Right cardiac atrium (tissue), 5 donors: ENCODE measurements at regions of chr2 and their contacts with region 1.

Region 1: DNA sequence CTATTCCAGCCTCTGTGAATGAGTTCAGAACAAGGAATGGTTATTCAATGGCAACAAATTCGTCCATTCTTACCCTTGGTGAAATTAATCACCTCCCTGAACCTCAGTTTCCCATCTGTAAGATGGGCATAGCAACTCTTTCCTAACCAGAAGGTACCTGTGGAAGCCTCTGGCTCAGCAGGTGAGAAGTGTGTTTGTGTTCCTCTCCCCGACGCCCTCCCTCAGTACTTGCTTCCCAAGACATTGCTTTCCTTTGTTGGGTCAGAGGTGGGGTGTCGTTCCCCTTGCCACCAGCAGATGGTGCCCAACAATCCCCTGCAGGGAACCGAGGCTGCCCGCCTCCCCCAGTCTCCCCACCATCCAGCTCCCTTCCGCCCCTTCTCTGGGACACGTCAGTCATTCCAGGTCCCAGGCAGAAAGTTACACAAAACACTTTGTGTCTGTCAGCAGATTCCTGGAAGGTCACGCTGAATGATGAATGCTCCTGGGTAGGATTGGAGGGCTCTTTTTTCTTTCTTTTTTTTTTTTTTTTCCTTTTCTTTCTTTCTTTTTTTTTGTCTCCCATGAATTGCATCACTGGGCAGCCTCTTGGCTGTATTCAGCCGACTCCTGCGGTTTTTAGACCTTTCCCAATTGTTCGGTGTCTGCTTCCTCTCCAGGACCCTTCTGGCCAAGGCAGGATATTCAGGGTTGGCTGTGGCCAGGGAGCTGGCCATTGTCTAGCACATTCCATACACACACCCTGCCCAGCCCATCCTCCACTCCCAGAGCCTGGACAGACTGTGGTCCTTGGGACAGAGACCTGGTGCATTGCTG is 117.3 kb downstream of the LPIN1 start:
- DNase-seq: peak; percentile 91 to 95 (median 92)
- ATAC-seq: peak; percentile 94 to 98
- H3K4me3 ChIP-seq: no peak overlapping the region
- H3K27ac ChIP-seq: no peak overlapping the region
- H3K4me1 ChIP-seq: peaks cover 3% of the 10 kb centered on the region
- H3K27me3 ChIP-seq: no peaks in the 10 kb centered on the region

Region 2: GRCh38 chr2:12326449-12327190 is 462.9 kb after region 1 on chr2:
- intact Hi-C with region 1: no loop called
- DNase-seq: no peak
- ATAC-seq: no peak
- H3K4me3 ChIP-seq: no peak overlapping the region
- H3K27ac ChIP-seq: no peak overlapping the region
- H3K4me1 ChIP-seq: no peaks in the 10 kb centered on the region
- H3K27me3 ChIP-seq: no peaks in the 10 kb centered on the region

Region 3: GRCh38 chr2:12479065-12479601 is 615.4 kb after region 1 on chr2:
- intact Hi-C with region 1: loop called in 1 of 4 experiments (anchors 5 kb)
- DNase-seq: no peak
- ATAC-seq: no peak
- H3K4me3 ChIP-seq: no peak overlapping the region
- H3K27ac ChIP-seq: no peak overlapping the region
- H3K4me1 ChIP-seq: no peaks in the 10 kb centered on the region
- H3K27me3 ChIP-seq: no peaks in the 10 kb centered on the region